ENCODE measurements at regions of chr3 and their contacts with region 1.

Region 1: GRCh38 chr3:123028233-123028828 is 768 bp upstream of the SEMA5B start:
- DNase-seq: no peak
- ATAC-seq: peak; percentile 64

Region 2: DNA sequence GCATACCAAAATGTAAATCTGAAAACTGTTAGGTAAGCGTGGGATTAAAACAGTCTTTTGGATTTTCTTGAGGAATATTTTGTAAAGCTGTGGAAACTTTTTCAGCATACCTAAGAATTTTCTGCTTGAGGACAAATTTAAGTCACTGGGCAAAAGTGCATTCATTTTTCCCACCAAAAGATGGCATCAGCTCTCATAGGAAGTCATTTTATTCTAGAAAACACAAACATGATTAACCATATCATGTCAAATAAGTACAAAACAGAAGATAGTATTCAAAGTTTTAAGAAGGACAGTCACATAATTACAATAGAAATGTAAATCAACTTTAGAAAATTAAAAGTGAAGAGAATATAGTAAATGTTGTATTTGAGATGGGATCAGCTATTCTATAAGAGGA is 170.0 kb before region 1 on chr3:
- intact Hi-C with region 1: loop called (anchors 5 kb)
- DNase-seq: no peak
- ATAC-seq: no peak

Region 3: DNA sequence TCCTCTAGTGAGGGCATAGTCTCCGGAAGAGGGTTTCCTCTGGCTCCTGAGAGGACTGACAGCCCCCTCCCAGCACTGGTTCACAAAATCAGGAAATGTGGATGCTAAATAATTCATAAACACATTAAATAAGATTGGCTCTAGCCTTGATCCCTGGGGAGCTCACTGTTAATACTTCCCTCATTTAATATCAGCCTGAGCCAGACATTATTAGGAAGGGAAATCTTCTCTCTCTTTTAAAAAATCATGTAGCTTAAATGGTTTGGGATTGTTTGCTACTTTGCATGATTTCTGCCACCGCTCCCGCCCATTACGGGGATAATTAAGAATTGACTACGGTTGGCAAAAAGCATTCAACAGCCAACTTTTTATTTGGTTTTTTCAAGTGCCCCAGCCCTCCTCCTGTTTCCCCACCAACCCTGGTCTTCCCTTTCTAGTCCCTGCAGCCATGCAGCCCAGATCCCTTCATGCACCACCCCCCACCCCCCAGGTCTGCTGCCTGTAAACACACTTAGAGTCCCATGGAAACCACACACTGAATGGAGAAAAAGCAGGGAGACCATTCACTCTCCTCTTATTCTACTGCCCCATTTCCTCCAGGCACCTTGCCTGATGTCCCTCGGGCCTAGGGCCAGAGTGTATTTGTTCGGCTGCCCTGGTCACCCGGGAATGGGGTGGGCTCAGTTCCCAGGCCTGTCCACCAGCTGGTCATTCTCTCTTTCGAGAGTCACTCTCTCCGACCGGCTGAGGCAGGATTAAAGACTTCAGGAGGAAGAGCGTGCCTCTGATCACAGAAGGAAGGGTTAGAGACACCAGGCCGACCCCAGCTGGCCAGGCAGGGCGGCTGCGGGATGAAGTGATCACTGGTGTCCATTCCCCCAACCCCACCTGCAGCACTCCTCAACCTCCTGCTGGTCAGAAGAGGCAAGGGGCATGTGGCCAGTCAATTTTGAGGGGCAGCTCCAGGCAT is 45.8 kb before region 1 on chr3:
- intact Hi-C with region 1: loop called (anchors 5 kb)
- DNase-seq: no peak
- ATAC-seq: peak; percentile 23

Measured in Right ventricle myocardium inferior (tissue), 1 donor.